PC-3 (cell line): ENCODE measurements at regions of chr2 and their contacts with region 1.

Region 1: GRCh38 chr2:180125245-180125962 is 118.3 kb upstream of the CWC22 start:
- DNase-seq: peak; percentile 97
- ATAC-seq: peak; percentile 92
- H3K4me3 ChIP-seq: peak overlapping the region; percentile 17; the same call in 1 of the 2 replicates
- H3K27ac ChIP-seq: peak overlapping the region; percentile 25
- H3K4me1 ChIP-seq: peaks cover 18% of the 10 kb centered on the region
- H3K27me3 ChIP-seq: no peaks in the 10 kb centered on the region
- CTCF ChIP-seq: peak; percentile 80

Region 2: GRCh38 chr2:180322781-180323180 is 197.4 kb after region 1 on chr2:
- CTCF ChIA-PET with region 1: no interaction called
- POLR2A ChIA-PET with region 1: no interaction called
- intact Hi-C with region 1: loop called (anchors 1 kb)
- DNase-seq: peak; percentile 61
- ATAC-seq: peak; percentile 91
- H3K4me3 ChIP-seq: no peak overlapping the region
- H3K27ac ChIP-seq: no peak overlapping the region
- H3K4me1 ChIP-seq: no peaks in the 10 kb centered on the region; the same call in 1 of the 2 replicates
- H3K27me3 ChIP-seq: no peaks in the 10 kb centered on the region
- CTCF ChIP-seq: no peak

Region 3: DNA sequence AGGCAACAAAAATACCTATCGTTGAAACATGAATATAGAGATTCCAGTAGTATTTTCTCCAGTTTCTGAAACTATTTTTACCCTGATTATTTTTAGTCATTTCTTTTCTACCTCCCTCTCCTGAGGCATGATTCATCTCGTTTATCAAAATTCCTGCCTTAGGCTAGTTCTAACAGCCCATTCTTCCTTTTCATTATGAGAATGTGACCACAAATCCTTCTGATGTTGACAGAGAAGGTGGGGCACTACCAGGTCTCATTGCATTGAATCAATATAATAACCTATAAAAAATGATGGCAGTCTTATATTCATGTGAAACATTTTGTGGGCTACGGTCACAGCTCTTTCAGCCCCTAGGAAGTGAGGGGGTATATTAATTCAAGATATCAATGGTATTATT is 448.6 kb after region 1 on chr2:
- CTCF ChIA-PET with region 1: no interaction called
- POLR2A ChIA-PET with region 1: no interaction called
- intact Hi-C with region 1: loop called (anchors 2 kb)
- DNase-seq: peak; percentile 97
- ATAC-seq: peak; percentile 89
- H3K4me3 ChIP-seq: no peak overlapping the region
- H3K27ac ChIP-seq: peak overlapping the region; percentile 73
- H3K4me1 ChIP-seq: peaks cover 48% of the 10 kb centered on the region
- H3K27me3 ChIP-seq: no peaks in the 10 kb centered on the region
- CTCF ChIP-seq: no peak

Region 4: GRCh38 chr2:180980106-180980942 is 854.9 kb after region 1 on chr2 and contains the start of gene UBE2E3:
- CTCF ChIA-PET with region 1: interaction called, 18 read pairs
- POLR2A ChIA-PET with region 1: no interaction called
- intact Hi-C with region 1: loop called (anchors 2 kb)
- DNase-seq: peak; percentile 86
- ATAC-seq: peak; percentile 64
- H3K4me3 ChIP-seq: peak within 1 kb of the TSS; percentile 81
- H3K27ac ChIP-seq: peak within 1 kb of the TSS; percentile 99
- H3K4me1 ChIP-seq: peaks cover 46% of the 10 kb centered on the region
- H3K27me3 ChIP-seq: no peaks in the 10 kb centered on the region
- CTCF ChIP-seq: peak; percentile 58
- total RNA-seq, gene UBE2E3: 66.6 and 95.6 TPM in 2 replicates

Region 5: GRCh38 chr2:181104512-181105115 is 979.2 kb after region 1 on chr2:
- CTCF ChIA-PET with region 1: no interaction called
- POLR2A ChIA-PET with region 1: no interaction called
- intact Hi-C with region 1: loop called (anchors 1 kb)
- DNase-seq: peak; percentile 81
- ATAC-seq: peak; percentile 59
- H3K4me3 ChIP-seq: no peak overlapping the region
- H3K27ac ChIP-seq: no peak overlapping the region
- H3K4me1 ChIP-seq: peaks cover 33% of the 10 kb centered on the region
- H3K27me3 ChIP-seq: no peaks in the 10 kb centered on the region
- CTCF ChIP-seq: peak; percentile 95

Region 6: DNA sequence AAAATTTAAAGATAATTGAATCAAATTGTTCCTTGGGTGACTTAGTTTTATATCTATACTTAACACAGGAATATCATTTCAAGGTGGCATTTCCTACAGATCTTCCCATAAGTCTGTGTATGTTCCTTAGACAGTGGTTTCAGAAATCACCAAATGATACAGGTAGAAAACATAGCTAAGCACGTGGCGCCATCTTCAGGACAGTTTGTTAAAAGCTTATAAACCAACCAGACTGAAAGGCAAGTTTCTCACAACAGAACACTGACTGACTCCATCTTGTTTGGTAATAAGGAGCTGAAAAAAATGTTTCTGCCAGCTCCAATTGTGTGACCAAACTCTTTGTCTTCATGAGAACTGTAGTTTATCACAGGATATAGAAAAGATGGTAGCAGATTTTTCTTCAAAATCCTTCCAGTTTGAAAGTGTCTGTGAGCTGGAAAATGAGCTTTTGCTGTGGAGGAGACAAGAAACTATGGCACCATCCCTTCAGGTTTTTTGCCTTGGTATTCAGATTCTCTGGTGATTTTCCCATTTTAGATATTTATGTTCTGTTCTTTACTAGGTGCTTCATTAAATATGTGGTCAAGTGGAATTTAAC is 1589.7 kb after region 1 on chr2:
- CTCF ChIA-PET with region 1: interaction called, 7 read pairs
- POLR2A ChIA-PET with region 1: no interaction called
- intact Hi-C with region 1: loop called (anchors 1 kb)
- DNase-seq: peak; percentile 89
- ATAC-seq: peak; percentile 84
- H3K4me3 ChIP-seq: no peak overlapping the region
- H3K27ac ChIP-seq: no peak overlapping the region
- H3K4me1 ChIP-seq: no peaks in the 10 kb centered on the region
- H3K27me3 ChIP-seq: no peaks in the 10 kb centered on the region
- CTCF ChIP-seq: peak; percentile 92